ENCODE measurements at regions of chr1 and their contacts with region 1.

Region 1: DNA sequence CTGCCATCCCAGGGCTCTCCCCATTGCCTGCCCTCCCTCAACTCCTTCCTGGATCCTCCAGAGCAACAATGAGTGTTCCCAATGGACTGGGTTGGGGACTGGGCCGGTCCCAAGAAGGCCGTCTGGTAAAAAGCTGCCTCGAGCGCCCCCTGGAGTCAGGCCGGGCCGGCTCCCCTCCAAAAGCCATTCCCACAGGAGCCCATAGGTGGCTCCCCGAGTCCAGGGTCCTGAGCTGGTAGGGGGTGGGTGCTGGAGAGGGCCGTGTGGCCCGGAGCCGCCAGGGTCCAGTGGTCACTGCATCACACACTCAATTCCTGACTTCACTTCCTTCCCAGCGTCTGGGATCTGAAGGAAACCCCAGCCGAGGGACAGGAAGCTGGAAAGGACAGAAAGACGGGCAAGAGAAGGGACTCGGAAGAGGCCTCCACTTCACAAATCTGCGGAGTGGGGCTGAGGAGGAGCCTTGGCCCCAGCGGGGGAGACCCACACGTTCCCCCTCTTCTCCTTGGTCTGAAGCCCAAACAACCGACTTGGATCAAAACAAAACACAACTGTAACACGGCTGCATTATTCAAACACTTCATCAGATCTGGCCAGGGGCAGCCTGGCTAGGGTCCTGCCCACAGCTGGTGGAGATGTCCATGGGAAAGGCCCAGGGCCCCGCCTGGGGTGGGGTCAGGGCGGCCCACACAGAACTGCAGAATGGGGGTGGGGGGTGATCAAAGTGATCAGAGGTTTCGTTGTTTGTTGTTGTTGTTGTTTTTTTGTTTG is 10.9 kb upstream of the ALDH4A1 start:
- DNase-seq: peak; percentile 50
- ATAC-seq: peak; percentile 98
- H3K4me3 ChIP-seq: no peak overlapping the region
- H3K27ac ChIP-seq: no peak overlapping the region
- H3K4me1 ChIP-seq: peaks cover 0 to 8% of the 10 kb centered on the region in 2 experiments; a peak in 1 of 4 replicates
- H3K27me3 ChIP-seq: no peaks in the 10 kb centered on the region
- CTCF ChIP-seq: peak; percentile 100
- POLR2A ChIP-seq: no peak
- RAD21 ChIP-seq: peak; percentile 97

Region 2: GRCh38 chr1:18182398-18183160 is 730.7 kb before region 1 on chr1:
- CTCF ChIA-PET with region 1: no interaction called
- POLR2A ChIA-PET with region 1: no interaction called
- RAD21 ChIA-PET with region 1: no interaction called
- intact Hi-C with region 1: no loop called
- DNase-seq: no peak
- ATAC-seq: peak; percentile 50; the same call in 1 of the 2 replicates
- H3K4me3 ChIP-seq: no peak overlapping the region
- H3K27ac ChIP-seq: no peak overlapping the region
- H3K4me1 ChIP-seq: no peaks in the 10 kb centered on the region
- H3K27me3 ChIP-seq: peaks cover 66% of the 10 kb centered on the region
- CTCF ChIP-seq: no peak
- POLR2A ChIP-seq: no peak
- RAD21 ChIP-seq: no peak; the same call in 1 of the 2 replicates

Region 3: DNA sequence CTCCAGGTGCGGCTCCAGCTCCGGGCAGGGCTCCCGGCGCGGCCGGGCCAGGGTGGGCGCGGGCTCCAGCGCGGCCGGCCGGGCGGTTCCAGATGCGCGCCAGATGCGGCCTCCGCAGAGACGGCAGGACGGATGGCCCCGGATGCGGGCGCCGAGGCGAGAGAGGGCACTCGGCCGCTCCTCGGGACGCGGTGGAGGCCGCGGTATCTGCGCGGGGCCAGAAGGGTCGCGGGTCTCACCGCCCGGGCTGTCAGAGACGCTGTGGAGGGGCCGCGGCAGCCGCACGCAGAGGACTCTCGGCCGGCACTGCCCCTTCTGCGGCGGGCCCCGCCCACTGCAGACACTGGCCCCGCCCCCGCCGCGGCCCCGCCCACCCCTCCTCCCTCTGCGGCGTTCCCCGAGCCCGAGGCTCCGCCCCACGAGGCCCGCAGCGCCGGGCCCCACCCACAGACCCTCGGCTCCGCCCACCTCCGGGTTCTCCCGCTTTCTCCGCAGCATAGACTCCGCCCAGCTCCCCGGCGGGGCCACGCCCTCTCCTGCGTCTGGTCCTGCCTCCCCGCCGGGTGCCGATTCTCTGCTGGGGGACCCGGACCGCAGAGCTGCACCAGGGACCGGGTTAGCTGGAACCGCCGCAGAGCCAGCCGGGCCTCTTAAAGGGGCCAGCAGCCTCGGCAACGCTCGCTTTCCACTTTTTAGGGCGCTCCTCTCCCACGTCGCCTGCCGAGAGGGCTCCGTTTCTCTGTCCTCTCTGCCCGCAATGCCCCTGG is 43.3 kb after region 1 on chr1 and contains the start of gene IFFO2:
- CTCF ChIA-PET with region 1: interaction called, 20 read pairs
- POLR2A ChIA-PET with region 1: no interaction called
- RAD21 ChIA-PET with region 1: interaction called in 1 of 2 experiments, 4 read pairs
- intact Hi-C with region 1: loop called (anchors 5 kb)
- DNase-seq: peak; percentile 76
- ATAC-seq: peak; percentile 91
- H3K4me3 ChIP-seq: peak within 1 kb of the TSS; percentile 63 to 75
- H3K27ac ChIP-seq: peak within 1 kb of the TSS; percentile 70; the same call in 1 of the 2 replicates
- H3K4me1 ChIP-seq: peaks cover 3 to 22% of the 10 kb centered on the region in 2 experiments; a peak in 3 of 4 replicates
- H3K27me3 ChIP-seq: no peaks in the 10 kb centered on the region
- CTCF ChIP-seq: no peak
- POLR2A ChIP-seq: peak; percentile 72
- RAD21 ChIP-seq: no peak
- total RNA-seq, gene IFFO2: 15.6 TPM